HCT116 (cell line): ENCODE measurements at regions of chr2 and their contacts with region 1.

Region 1: GRCh38 chr2:68121873-68122679 is 35.6 kb upstream of the PNO1 start:
- DNase-seq: peak; percentile 70
- ATAC-seq: peak; percentile 91
- H3K4me3 ChIP-seq: no peak overlapping the region
- H3K27ac ChIP-seq: no peak overlapping the region
- H3K4me1 ChIP-seq: peaks cover 0 to 4% of the 10 kb centered on the region in 2 experiments; a peak in 1 of 4 replicates
- H3K27me3 ChIP-seq: no peaks in the 10 kb centered on the region
- CTCF ChIP-seq: peak; percentile 91 to 98 (median 97)
- POLR2A ChIP-seq: no peak
- RAD21 ChIP-seq: peak; percentile 95

Region 2: DNA sequence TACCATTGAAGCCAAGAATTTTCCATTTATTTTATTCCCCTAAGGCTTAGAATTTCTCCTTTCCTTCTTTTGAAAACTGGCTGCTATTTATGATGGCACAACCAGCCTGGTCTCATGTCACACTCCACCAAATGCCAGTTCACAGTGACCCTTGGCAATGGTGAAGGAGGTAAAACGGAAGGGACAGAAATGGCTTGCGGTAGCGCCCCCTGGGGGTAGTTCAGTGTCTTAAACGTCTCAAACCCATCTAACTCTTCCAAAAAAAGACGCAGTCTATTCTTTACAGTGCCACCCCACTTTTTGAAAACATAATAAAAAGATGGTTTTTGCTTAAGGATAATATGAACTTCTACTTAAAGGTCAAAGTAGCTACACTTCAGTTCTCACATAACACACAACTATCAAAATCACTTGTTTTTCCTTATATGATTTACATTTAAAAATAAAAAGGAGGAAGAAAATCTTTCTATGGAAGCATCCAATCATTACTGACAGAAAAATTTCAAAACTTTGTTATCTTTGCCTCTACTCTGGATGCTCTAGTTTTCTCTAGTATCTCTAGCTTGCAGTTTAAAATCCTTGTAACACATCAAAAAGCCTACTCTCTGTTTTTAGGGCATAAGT is 63.6 kb after region 1 on chr2:
- CTCF ChIA-PET with region 1: no interaction called
- POLR2A ChIA-PET with region 1: no interaction called
- RAD21 ChIA-PET with region 1: no interaction called
- intact Hi-C with region 1: loop called (anchors 1 kb)
- DNase-seq: peak; percentile 62
- ATAC-seq: peak; percentile 86
- H3K4me3 ChIP-seq: no peak overlapping the region
- H3K27ac ChIP-seq: no peak overlapping the region
- H3K4me1 ChIP-seq: peaks cover 0 to under 1% of the 10 kb centered on the region in 2 experiments; a peak in 1 of 4 replicates
- H3K27me3 ChIP-seq: no peaks in the 10 kb centered on the region
- CTCF ChIP-seq: peak in 2 of 3 experiments; percentile 88 to 89; a peak in 5 of 6 replicates
- POLR2A ChIP-seq: no peak
- RAD21 ChIP-seq: no peak

Region 3: GRCh38 chr2:68282811-68283418 is 160.8 kb after region 1 on chr2:
- CTCF ChIA-PET with region 1: interaction called, 16 read pairs
- POLR2A ChIA-PET with region 1: no interaction called
- RAD21 ChIA-PET with region 1: interaction called in 1 of 2 experiments, 4 read pairs
- intact Hi-C with region 1: loop called (anchors 2 kb)
- DNase-seq: peak; percentile 33
- ATAC-seq: peak; percentile 77
- H3K4me3 ChIP-seq: no peak overlapping the region
- H3K27ac ChIP-seq: no peak overlapping the region
- H3K4me1 ChIP-seq: no peaks in the 10 kb centered on the region
- H3K27me3 ChIP-seq: peaks cover 20% of the 10 kb centered on the region
- CTCF ChIP-seq: peak; percentile 69 to 75 (median 72)
- POLR2A ChIP-seq: no peak
- RAD21 ChIP-seq: peak; percentile 70

Region 4: GRCh38 chr2:68362069-68362468 is 240.0 kb after region 1 on chr2:
- CTCF ChIA-PET with region 1: interaction called, 9 read pairs
- POLR2A ChIA-PET with region 1: no interaction called
- RAD21 ChIA-PET with region 1: interaction called in 1 of 2 experiments, 3 read pairs
- intact Hi-C with region 1: loop called (anchors 5 kb)
- DNase-seq: peak; percentile 65
- ATAC-seq: peak; percentile 77
- H3K4me3 ChIP-seq: no peak overlapping the region
- H3K27ac ChIP-seq: no peak overlapping the region
- H3K4me1 ChIP-seq: peaks cover 0 to 4% of the 10 kb centered on the region in 2 experiments; a peak in 2 of 4 replicates
- H3K27me3 ChIP-seq: no peaks in the 10 kb centered on the region
- CTCF ChIP-seq: peak; percentile 69 to 84 (median 78); a peak in 5 of 6 replicates
- POLR2A ChIP-seq: no peak
- RAD21 ChIP-seq: peak; percentile 60